Activated CD4-positive, alpha-beta T cell treated with anti-CD3 and anti-CD28 coated beads, Interleukin-2, amount 10 ng/mL, durations not matched to agents 24 days and 14 days (primary cell): ENCODE measurements at regions of chr3 and their contacts with region 1.

Region 1: DNA sequence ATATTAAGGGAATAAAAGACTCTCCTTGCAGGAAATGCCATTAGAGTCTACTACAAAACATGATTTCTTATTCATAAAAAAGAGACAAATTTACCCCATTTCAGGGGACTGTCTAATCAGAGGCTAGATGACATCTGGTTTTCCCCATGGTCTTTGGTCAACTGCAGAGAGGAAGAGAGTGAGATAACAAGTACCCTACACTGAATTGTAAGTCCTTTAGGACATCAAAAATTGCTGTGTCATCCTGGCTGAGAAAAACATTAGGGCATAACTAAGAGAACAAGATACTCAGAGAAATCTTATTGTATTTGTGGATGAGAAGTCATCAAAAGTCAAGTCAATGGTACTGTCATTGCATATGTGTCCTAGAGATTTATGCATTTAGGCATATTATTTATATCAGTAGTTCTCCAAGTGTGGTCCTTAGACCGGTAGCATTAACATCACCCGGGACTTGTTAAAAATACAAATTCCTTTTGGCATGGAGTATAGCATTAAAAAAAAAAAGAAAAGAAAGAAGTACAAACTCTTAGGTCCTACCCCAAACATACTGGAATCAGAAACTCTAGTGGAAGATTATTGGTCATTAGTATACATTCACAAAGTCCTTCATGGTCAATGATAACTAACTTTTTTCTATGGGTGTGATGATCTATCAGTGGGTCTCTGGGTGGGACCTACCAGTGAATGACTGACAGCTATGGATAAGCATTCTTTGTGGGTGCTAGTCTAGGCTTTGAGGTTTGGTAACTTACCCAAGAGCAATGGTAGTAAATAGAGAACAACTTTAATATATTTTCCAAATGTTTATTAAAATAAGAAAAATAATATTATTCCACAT is 29.0 kb upstream of the TBC1D5 start:
- DNase-seq: peak; percentile 25
- H3K4me3 Mint-ChIP-seq: no peak overlapping the region
- H3K27ac Mint-ChIP-seq: no peak overlapping the region
- H3K4me1 Mint-ChIP-seq: peaks cover 17% of the 10 kb centered on the region
- H3K27me3 Mint-ChIP-seq: peaks cover 14% of the 10 kb centered on the region

Region 2: DNA sequence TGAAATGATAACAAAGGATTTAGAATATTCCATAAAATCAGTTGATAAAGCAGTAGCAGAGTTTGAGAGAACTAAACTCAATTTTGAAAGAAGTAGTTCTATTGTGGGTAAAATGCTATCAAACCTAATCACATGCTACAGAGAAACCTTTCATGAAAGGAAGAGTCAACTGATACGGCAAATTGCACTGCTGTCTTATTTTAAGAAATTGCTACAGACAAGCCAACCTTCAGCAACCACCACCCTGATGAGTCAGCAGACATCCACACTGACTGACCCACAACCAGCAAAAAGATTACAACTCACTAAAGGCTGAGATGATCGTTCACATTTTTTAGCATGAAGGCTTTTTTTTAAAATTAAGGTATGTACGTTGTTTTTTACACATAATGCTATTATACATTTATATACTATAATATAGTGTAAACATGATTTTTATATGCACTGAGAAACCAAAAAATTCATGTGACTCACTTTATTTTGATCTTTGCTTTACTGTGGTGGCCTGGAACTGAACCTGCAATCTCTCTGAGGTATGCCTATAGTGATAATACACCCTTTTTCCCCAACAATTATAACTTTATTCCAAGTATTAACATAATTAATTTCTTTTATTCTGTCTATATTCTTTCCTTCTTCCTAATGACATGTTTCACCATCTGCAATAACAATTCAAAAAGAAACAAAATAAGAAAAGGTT is 138.8 kb before region 1 on chr3:
- intact Hi-C with region 1: no loop called
- DNase-seq: no peak
- H3K4me3 Mint-ChIP-seq: no peak overlapping the region
- H3K27ac Mint-ChIP-seq: no peak overlapping the region
- H3K4me1 Mint-ChIP-seq: peaks cover 12% of the 10 kb centered on the region
- H3K27me3 Mint-ChIP-seq: no peaks in the 10 kb centered on the region

Region 3: GRCh38 chr3:17730318-17730967 is 41.0 kb before region 1 on chr3:
- intact Hi-C with region 1: loop called (anchors 5 kb)
- DNase-seq: no peak
- H3K4me3 Mint-ChIP-seq: no peak overlapping the region
- H3K27ac Mint-ChIP-seq: no peak overlapping the region
- H3K4me1 Mint-ChIP-seq: peaks cover 14% of the 10 kb centered on the region
- H3K27me3 Mint-ChIP-seq: no peaks in the 10 kb centered on the region

Region 4: GRCh38 chr3:18144571-18144970 is 373.2 kb after region 1 on chr3:
- intact Hi-C with region 1: no loop called
- DNase-seq: no peak
- H3K4me3 Mint-ChIP-seq: no peak overlapping the region
- H3K27ac Mint-ChIP-seq: no peak overlapping the region
- H3K4me1 Mint-ChIP-seq: no peaks in the 10 kb centered on the region
- H3K27me3 Mint-ChIP-seq: no peaks in the 10 kb centered on the region